ENCODE measurements at regions of chr20 and their contacts with region 1.

Region 1: DNA sequence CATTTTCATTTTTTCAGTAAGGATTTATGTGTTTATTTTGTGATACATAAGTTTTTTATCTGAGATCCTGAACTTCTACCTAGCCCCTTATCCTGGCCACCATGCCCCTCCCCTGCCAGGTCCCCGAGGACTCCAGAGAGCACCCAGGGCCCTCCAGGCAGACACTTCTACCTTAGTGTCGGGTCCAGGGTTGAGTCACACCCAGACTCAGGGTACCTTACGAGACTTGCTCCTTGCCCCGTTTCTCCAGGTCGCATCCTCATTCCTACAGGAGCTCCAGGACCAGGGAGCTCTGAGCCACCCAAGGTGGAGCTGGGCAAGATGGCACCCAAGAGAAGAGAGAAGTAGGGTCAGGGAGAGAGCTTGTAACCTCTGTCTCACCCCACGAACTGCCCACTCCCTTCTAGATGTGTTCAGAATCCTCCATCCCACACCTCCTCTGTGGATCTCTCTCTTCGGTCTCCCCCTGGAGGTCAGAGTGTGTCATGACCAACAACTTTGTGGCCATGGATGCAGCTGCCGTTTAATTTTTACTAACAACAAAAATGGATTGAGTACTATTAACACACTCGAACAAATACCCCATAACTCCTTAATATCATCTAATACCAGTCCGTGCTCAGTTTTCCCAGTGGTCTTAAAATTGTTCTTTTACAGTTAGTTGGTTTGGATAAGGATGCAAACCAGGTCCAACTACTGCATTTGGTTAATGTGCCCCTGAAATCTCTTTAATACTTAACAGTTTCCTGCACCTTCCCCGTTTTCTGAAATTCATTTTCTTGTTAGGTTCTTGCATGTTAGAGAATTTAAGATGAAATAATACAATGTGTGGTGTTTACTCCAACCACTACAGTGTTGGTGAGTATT is 130.6 kb upstream of the INSM1 start:
- DNase-seq: peak; percentile 54
- ATAC-seq: peak; percentile 92
- H3K4me3 Mint-ChIP-seq: no peak overlapping the region
- H3K27ac Mint-ChIP-seq: no peak overlapping the region
- H3K4me1 Mint-ChIP-seq: peaks cover 10% of the 10 kb centered on the region
- H3K27me3 Mint-ChIP-seq: peaks cover 4% of the 10 kb centered on the region; the same call in 1 of the 2 replicates
- CTCF ChIP-seq: peak; percentile 72

Region 2: DNA sequence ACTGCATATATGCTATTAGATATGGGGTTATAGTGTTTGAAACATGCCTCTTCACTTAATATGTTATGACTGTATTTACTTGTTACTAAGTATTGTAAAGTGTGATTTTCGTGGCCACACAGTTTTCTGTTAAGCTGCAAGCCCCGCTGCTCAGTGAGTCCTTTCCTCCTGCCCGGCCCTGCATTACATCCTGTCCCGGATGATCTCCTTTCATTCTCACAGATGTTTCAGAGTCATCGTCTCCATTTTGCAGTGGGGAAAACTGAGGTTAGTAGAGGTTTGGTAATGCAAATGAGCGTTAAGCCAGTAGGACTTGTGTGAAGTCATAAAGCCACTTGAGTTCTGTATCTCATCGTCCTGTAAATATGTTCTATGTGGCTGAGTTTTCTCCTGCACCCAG is 29.5 kb before region 1 on chr20:
- CTCF ChIA-PET with region 1: interaction called, 16 read pairs
- POLR2A ChIA-PET with region 1: no interaction called
- DNase-seq: no peak
- ATAC-seq: no peak
- H3K4me3 Mint-ChIP-seq: no peak overlapping the region
- H3K27ac Mint-ChIP-seq: no peak overlapping the region
- H3K4me1 Mint-ChIP-seq: peaks cover 45% of the 10 kb centered on the region
- H3K27me3 Mint-ChIP-seq: no peaks in the 10 kb centered on the region
- CTCF ChIP-seq: no peak

Region 3: DNA sequence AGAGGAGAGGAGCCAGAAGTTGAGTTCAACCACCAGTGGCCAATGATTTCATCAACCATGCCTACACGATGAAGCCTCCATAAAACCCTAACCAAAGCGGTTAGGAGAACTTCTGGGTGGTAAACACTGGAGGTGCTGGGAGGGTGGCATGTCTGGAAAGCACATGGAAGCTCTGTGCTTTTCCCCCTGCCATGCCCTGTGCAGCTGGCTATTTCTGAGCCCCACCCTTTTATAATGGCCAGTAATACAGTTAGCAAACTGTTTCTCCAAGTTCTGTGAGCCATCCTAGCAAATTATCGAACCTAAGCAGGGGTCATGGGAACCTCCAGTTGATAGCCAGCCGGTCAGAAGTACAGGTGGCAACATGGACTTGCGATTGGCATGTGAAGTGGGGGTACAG is 17.2 kb before region 1 on chr20:
- CTCF ChIA-PET with region 1: interaction called, 12 read pairs
- POLR2A ChIA-PET with region 1: no interaction called
- DNase-seq: no peak
- ATAC-seq: no peak
- H3K4me3 Mint-ChIP-seq: no peak overlapping the region
- H3K27ac Mint-ChIP-seq: no peak overlapping the region
- H3K4me1 Mint-ChIP-seq: peaks cover 24% of the 10 kb centered on the region
- H3K27me3 Mint-ChIP-seq: no peaks in the 10 kb centered on the region
- CTCF ChIP-seq: no peak

Region 4: DNA sequence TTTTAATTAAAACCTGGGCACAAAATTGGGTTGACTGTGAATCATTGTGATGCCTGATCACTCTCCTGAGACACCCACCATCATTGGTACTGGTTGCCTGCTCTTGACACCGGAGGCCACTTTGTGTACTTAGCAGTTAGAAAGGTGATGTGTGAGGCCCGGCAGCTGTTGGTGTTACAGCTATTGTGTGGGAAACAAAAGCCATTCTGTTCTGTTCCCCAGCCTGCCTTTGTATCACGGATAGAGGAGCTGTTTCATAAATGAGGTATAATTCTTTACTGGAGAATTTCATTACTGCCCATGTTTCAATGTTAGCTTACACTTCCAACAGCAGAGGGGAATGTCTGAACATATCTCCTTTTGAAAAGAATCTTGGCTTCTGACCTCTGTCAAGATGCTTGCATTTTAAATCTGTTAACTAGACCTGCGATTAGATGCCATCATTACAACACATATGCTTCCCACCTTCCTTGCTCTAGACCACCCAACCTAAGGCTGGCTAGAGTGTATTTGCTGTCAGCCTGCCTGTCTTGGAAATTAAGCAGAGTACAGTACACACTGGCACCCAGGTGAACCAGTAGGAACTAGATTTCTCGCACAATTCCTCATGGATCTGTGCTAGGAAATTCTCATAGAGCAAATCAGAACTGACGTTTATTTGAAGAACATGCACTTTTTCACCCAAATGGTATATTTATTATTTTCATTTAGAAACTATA is 11.8 kb before region 1 on chr20:
- CTCF ChIA-PET with region 1: interaction called, 12 read pairs
- POLR2A ChIA-PET with region 1: no interaction called
- DNase-seq: no peak
- ATAC-seq: peak; percentile 74
- H3K4me3 Mint-ChIP-seq: no peak overlapping the region
- H3K27ac Mint-ChIP-seq: no peak overlapping the region
- H3K4me1 Mint-ChIP-seq: peaks cover 11% of the 10 kb centered on the region
- H3K27me3 Mint-ChIP-seq: 0 out of 2 replicates have a peak, but pooled peaks cover 3% of the 10 kb centered on the region
- CTCF ChIP-seq: no peak

Region 5: GRCh38 chr20:20261159-20261558 is 23.8 kb after region 1 on chr20:
- CTCF ChIA-PET with region 1: interaction called, 13 read pairs
- POLR2A ChIA-PET with region 1: no interaction called
- DNase-seq: no peak
- ATAC-seq: no peak
- H3K4me3 Mint-ChIP-seq: no peak overlapping the region
- H3K27ac Mint-ChIP-seq: no peak overlapping the region
- H3K4me1 Mint-ChIP-seq: no peaks in the 10 kb centered on the region
- H3K27me3 Mint-ChIP-seq: no peaks in the 10 kb centered on the region; the same call in 1 of the 2 replicates
- CTCF ChIP-seq: no peak

Region 6: GRCh38 chr20:20317195-20317594 is 79.9 kb after region 1 on chr20:
- CTCF ChIA-PET with region 1: no interaction called
- POLR2A ChIA-PET with region 1: no interaction called
- DNase-seq: no peak
- ATAC-seq: no peak
- H3K4me3 Mint-ChIP-seq: no peak overlapping the region
- H3K27ac Mint-ChIP-seq: no peak overlapping the region
- H3K4me1 Mint-ChIP-seq: no peaks in the 10 kb centered on the region
- H3K27me3 Mint-ChIP-seq: no peaks in the 10 kb centered on the region
- CTCF ChIP-seq: no peak